ENCODE measurements at regions of chr15 and their contacts with region 1.

Region 1: DNA sequence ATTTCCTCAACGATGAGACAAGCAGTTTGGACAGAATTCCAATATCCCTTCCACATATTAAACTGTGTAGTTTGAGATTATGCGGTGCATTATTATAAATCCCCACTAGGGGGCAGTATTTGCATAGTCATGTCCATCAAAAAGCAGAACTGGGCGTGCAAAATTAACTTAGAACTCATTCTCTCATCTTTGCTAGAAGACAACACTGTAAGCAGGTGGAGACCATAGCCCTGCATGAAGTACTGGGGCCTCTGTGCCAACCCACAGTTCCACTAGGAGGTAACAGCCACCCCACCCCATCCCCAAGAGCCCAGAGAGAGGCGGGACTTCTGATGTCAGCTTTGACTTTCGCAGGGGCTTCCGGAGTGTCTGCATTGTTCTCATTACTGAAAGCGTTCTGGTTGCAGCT is 106.6 kb upstream of the TMC3 start:
- DNase-seq: no peak
- ATAC-seq: peak; percentile 54 to 59

Region 2: GRCh38 chr15:81660976-81661375 is 180.3 kb after region 1 on chr15:
- intact Hi-C with region 1: no loop called
- DNase-seq: no peak
- ATAC-seq: no peak

Region 3: GRCh38 chr15:81939604-81940440 is 459.2 kb after region 1 on chr15:
- intact Hi-C with region 1: loop called in 1 of 2 experiments (anchors 10 kb)
- DNase-seq: no peak
- ATAC-seq: no peak

Region 4: GRCh38 chr15:82046666-82047452 is 566.2 kb after region 1 on chr15:
- intact Hi-C with region 1: loop called in 1 of 2 experiments (anchors 5 kb)
- DNase-seq: peak; percentile 91
- ATAC-seq: peak; percentile 86

Region 5: GRCh38 chr15:82139823-82140268 is 659.2 kb after region 1 on chr15:
- intact Hi-C with region 1: loop called in 1 of 2 experiments (anchors 5 kb)
- DNase-seq: no peak
- ATAC-seq: peak in 1 of 2 donors; percentile 30

Region 6: GRCh38 chr15:82197733-82198594 is 717.3 kb after region 1 on chr15:
- intact Hi-C with region 1: loop called in 1 of 2 experiments (anchors 5 kb)
- DNase-seq: peak; percentile 65
- ATAC-seq: peak; percentile 89 to 92

Measured in left cardiac atrium (tissue), 4 donors.